ENCODE measurements at regions of chr1 and their contacts with region 1.

Region 1: GRCh38 chr1:207868774-207869721 is 41.9 kb downstream of the CD34 start:
- DNase-seq: no peak
- H3K4me3 ChIP-seq: peak overlapping the region; percentile 71
- H3K27ac ChIP-seq: no peak overlapping the region
- H3K27me3 ChIP-seq: no peaks in the 10 kb centered on the region
- CTCF ChIP-seq: peak; percentile 65

Region 2: GRCh38 chr1:207719234-207719633 is 149.8 kb before region 1 on chr1:
- CTCF ChIA-PET with region 1: no interaction called
- POLR2A ChIA-PET with region 1: no interaction called
- DNase-seq: no peak
- H3K4me3 ChIP-seq: no peak overlapping the region
- H3K27ac ChIP-seq: no peak overlapping the region
- H3K27me3 ChIP-seq: no peaks in the 10 kb centered on the region
- CTCF ChIP-seq: no peak

Region 3: GRCh38 chr1:207740224-207740623 is 128.8 kb before region 1 on chr1:
- CTCF ChIA-PET with region 1: no interaction called
- POLR2A ChIA-PET with region 1: no interaction called
- DNase-seq: no peak
- H3K4me3 ChIP-seq: no peak overlapping the region
- H3K27ac ChIP-seq: no peak overlapping the region
- H3K27me3 ChIP-seq: no peaks in the 10 kb centered on the region
- CTCF ChIP-seq: no peak

Region 4: DNA sequence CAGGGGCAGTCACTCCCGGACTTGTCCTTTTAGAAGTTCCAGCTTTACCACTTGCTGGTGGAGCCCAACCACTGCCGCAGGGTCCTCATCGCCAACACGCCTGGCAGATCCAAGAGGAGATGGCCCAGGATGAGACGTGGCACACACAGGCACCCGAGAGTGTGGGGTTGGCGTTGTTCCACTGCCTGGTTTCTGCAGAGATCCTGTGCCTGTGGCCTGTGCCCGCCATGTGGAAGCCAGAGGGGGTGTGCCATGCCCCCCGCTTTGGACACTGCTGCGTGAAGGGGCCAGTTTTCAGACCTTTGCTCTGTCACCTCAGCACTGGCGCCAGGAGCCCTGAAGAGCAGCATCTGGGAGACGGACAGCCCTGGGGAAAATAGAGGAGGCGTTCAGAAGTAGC is 106.4 kb before region 1 on chr1:
- CTCF ChIA-PET with region 1: no interaction called
- POLR2A ChIA-PET with region 1: no interaction called
- DNase-seq: no peak
- H3K4me3 ChIP-seq: no peak overlapping the region
- H3K27ac ChIP-seq: no peak overlapping the region
- H3K27me3 ChIP-seq: no peaks in the 10 kb centered on the region
- CTCF ChIP-seq: no peak

Region 5: DNA sequence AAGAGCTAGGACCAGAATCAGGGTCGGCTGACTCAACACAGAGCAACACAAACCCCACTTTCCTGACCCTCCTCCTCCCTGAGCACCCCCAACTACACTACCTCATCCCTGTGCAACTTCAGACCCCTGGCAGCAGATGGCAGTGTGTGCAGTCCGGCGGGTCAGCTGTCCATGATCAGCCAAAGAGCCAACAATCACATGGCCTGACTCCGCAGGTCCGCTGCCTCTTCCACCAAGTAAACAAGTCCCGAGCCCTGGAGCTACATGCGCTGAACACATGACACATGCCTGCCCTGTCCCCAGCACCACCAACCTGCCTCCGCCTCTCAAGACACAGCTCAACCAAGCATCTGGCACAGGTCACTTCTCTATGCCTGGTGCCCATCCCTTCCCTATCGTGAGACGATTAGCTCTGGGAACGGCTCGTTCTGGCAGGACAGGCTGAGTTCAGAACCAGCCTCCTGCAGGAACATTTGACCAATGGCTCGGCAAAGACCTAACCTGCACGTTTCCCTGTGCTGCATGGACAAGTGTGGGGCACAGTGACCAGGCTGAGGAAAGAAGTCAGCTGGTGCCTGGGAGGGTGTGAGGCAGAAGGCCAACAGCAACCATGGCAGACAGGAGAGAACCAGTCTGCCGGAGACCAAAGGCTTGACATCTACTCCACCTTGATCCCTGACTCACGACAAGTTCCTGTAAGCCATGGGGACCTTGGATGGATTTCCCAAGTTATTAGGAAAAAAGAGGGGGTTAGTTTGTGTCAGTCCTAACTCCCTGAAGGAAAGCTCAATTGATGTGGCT is 56.9 kb before region 1 on chr1:
- CTCF ChIA-PET with region 1: interaction called, 10 read pairs
- POLR2A ChIA-PET with region 1: no interaction called
- DNase-seq: no peak
- H3K4me3 ChIP-seq: no peak overlapping the region
- H3K27ac ChIP-seq: no peak overlapping the region
- H3K27me3 ChIP-seq: no peaks in the 10 kb centered on the region
- CTCF ChIP-seq: peak; percentile 45

Region 6: DNA sequence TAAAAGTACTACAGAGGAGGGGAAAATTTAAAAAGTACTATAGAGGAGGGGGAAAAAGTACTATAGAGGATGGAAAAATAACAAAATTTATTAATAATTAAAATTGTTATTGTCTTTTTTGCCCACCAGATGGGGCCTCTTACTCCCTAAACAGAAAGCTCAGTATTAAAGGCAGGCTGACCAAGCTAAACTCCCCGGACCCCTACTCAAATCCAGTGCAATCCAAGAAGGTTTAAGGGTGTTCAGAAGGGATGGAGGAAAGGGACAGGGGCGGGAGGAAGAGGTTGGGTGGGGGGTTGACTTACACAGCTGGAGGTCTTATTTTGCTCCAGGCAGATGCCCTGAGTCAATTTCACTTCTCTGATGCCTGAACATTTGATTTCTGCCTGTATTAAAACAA is 28.1 kb after region 1 on chr1:
- CTCF ChIA-PET with region 1: interaction called, 13 read pairs
- POLR2A ChIA-PET with region 1: no interaction called
- DNase-seq: no peak
- H3K4me3 ChIP-seq: no peak overlapping the region
- H3K27ac ChIP-seq: no peak overlapping the region
- H3K27me3 ChIP-seq: no peaks in the 10 kb centered on the region
- CTCF ChIP-seq: peak; percentile 42

Measured in AG04450 (cell line).